ENCODE measurements at regions of chr4 and their contacts with region 1.

Region 1: GRCh38 chr4:131091896-131092295 is 1995.9 kb downstream of the C4orf33 start:
- DNase-seq: no peak
- ATAC-seq: peak; percentile 71
- H3K4me3 ChIP-seq: no peak overlapping the region
- H3K27ac ChIP-seq: no peak overlapping the region
- H3K4me1 ChIP-seq: no peaks in the 10 kb centered on the region
- H3K27me3 ChIP-seq: no peaks in the 10 kb centered on the region
- CTCF ChIP-seq: peak in 2 of 3 experiments; percentile 21 to 37; a peak in 3 of 6 replicates
- EP300 ChIP-seq: no peak
- POLR2A ChIP-seq: no peak
- RAD21 ChIP-seq: peak; percentile 63

Region 2: GRCh38 chr4:131337936-131338335 is 246.0 kb after region 1 on chr4:
- CTCF ChIA-PET with region 1: no interaction called
- POLR2A ChIA-PET with region 1: no interaction called
- RAD21 ChIA-PET with region 1: no interaction called
- SMC1A ChIA-PET with region 1: no interaction called
- in situ Hi-C with region 1: no loop called
- intact Hi-C with region 1: no loop called
- DNase-seq: no peak
- ATAC-seq: no peak
- H3K4me3 ChIP-seq: no peak overlapping the region
- H3K27ac ChIP-seq: no peak overlapping the region
- H3K4me1 ChIP-seq: no peaks in the 10 kb centered on the region
- H3K27me3 ChIP-seq: no peaks in the 10 kb centered on the region
- CTCF ChIP-seq: no peak
- EP300 ChIP-seq: no peak
- POLR2A ChIP-seq: no peak
- RAD21 ChIP-seq: no peak

Region 3: GRCh38 chr4:131430302-131430701 is 338.4 kb after region 1 on chr4:
- CTCF ChIA-PET with region 1: interaction called, 5 read pairs
- POLR2A ChIA-PET with region 1: no interaction called
- RAD21 ChIA-PET with region 1: no interaction called
- SMC1A ChIA-PET with region 1: interaction called, 7 read pairs
- in situ Hi-C with region 1: no loop called
- intact Hi-C with region 1: loop called (anchors 10 kb)
- DNase-seq: no peak
- ATAC-seq: peak; percentile 85
- H3K4me3 ChIP-seq: no peak overlapping the region
- H3K27ac ChIP-seq: no peak overlapping the region
- H3K4me1 ChIP-seq: no peaks in the 10 kb centered on the region
- H3K27me3 ChIP-seq: no peaks in the 10 kb centered on the region
- CTCF ChIP-seq: peak; percentile 37 to 45 (median 42); a peak in 5 of 6 replicates
- EP300 ChIP-seq: no peak
- POLR2A ChIP-seq: no peak
- RAD21 ChIP-seq: peak; percentile 51

Region 4: DNA sequence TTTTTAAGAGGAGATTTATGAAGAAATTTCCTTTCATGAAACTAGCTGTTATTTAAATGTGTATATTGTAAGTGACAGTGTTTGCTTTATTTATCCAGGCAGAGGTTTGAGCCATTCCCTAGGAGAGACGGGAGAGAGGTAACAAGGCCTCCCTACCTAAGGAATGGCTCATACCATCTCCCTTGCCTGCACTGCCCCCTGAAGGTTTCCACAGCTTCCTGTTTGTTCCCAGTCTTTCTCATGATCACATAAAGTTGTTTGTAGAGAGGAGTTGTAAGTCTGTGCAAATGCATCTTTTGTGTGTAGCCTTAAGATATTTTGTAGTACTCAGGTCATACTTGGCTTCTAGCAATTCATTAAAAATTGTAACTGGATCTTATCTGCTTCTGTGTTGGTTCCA is 552.7 kb after region 1 on chr4:
- CTCF ChIA-PET with region 1: interaction called, 10 read pairs
- POLR2A ChIA-PET with region 1: no interaction called
- RAD21 ChIA-PET with region 1: interaction called, 6 read pairs
- SMC1A ChIA-PET with region 1: interaction called, 5 read pairs
- in situ Hi-C with region 1: no loop called
- intact Hi-C with region 1: loop called (anchors 10 kb)
- DNase-seq: no peak
- ATAC-seq: peak; percentile 70
- H3K4me3 ChIP-seq: no peak overlapping the region
- H3K27ac ChIP-seq: no peak overlapping the region
- H3K4me1 ChIP-seq: no peaks in the 10 kb centered on the region
- H3K27me3 ChIP-seq: no peaks in the 10 kb centered on the region
- CTCF ChIP-seq: peak; percentile 19 to 44 (median 41); a peak in 3 of 6 replicates
- EP300 ChIP-seq: no peak
- POLR2A ChIP-seq: no peak
- RAD21 ChIP-seq: peak; percentile 61

Region 5: GRCh38 chr4:132227151-132227856 is 1135.4 kb after region 1 on chr4:
- CTCF ChIA-PET with region 1: interaction called, 3 read pairs
- POLR2A ChIA-PET with region 1: no interaction called
- RAD21 ChIA-PET with region 1: no interaction called
- SMC1A ChIA-PET with region 1: no interaction called
- in situ Hi-C with region 1: no loop called
- intact Hi-C with region 1: loop called (anchors 2 kb)
- DNase-seq: no peak
- ATAC-seq: peak; percentile 29; the same call in 2 of the 3 replicates
- H3K4me3 ChIP-seq: no peak overlapping the region
- H3K27ac ChIP-seq: no peak overlapping the region
- H3K4me1 ChIP-seq: no peaks in the 10 kb centered on the region
- H3K27me3 ChIP-seq: no peaks in the 10 kb centered on the region
- CTCF ChIP-seq: no peak
- EP300 ChIP-seq: no peak
- POLR2A ChIP-seq: no peak
- RAD21 ChIP-seq: no peak

Region 6: DNA sequence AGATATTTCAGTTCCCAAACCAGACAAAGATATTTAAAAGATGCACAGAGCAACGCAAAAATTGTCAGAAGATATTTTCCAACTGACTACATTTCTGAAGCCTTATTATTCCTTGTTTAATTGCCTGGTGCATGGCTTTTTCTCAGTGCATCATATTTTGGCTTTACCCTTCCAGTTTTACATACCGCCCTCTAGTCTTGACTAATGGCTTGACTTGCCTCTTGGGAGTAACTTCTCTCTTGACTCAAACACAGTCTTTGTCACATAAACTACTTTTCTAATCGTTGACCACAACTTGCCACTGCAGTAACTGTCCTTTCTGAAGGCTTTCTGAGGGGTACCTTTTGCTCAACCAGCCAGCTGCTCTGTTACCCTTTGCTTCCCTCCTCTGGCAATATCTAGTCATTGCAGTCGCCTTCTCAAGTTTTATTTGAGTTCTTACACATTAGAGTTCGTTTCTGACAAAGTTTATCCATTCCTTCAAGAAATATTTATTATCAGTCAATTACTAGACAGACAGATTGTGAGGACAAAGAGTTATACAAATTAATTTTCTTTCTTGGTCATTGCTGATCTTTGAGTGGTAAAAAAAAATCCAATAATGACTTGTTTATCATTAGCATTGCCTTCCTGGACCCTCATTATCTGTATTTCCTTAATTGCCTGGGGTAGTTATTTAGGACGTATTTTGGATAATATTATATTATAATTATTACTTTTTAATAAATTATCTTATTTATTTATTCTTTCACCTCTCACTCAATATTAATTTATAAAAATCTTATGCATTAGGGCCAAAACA is 1550.3 kb after region 1 on chr4:
- CTCF ChIA-PET with region 1: interaction called, 4 read pairs
- POLR2A ChIA-PET with region 1: no interaction called
- RAD21 ChIA-PET with region 1: no interaction called
- SMC1A ChIA-PET with region 1: no interaction called
- in situ Hi-C with region 1: loop called (anchors 25 kb)
- intact Hi-C with region 1: loop called (anchors 5 kb)
- DNase-seq: peak; percentile 3
- ATAC-seq: peak; percentile 64
- H3K4me3 ChIP-seq: no peak overlapping the region
- H3K27ac ChIP-seq: no peak overlapping the region
- H3K4me1 ChIP-seq: no peaks in the 10 kb centered on the region
- H3K27me3 ChIP-seq: no peaks in the 10 kb centered on the region
- CTCF ChIP-seq: peak; percentile 68 to 75 (median 74)
- EP300 ChIP-seq: no peak
- POLR2A ChIP-seq: no peak
- RAD21 ChIP-seq: peak; percentile 93